Ovary (tissue), 10 donors: ENCODE measurements at regions of chr15 and their contacts with region 1.

Region 1: GRCh38 chr15:71660501-71660900 is 149.9 kb upstream of the NR2E3 start:
- DNase-seq: no peak
- H3K4me3 ChIP-seq: no peak overlapping the region
- H3K27ac ChIP-seq: no peak overlapping the region
- H3K4me1 ChIP-seq: no peaks in the 10 kb centered on the region
- H3K27me3 ChIP-seq: no peaks in the 10 kb centered on the region
- CTCF ChIP-seq: no peak
- EP300 ChIP-seq: no peak
- POLR2A ChIP-seq: no peak

Region 2: GRCh38 chr15:71575474-71576045 is 84.9 kb before region 1 on chr15:
- intact Hi-C with region 1: no loop called
- DNase-seq: no peak
- H3K4me3 ChIP-seq: no peak overlapping the region
- H3K27ac ChIP-seq: no peak overlapping the region
- H3K4me1 ChIP-seq: no peaks in the 10 kb centered on the region
- H3K27me3 ChIP-seq: no peaks in the 10 kb centered on the region
- CTCF ChIP-seq: no peak
- EP300 ChIP-seq: no peak
- POLR2A ChIP-seq: no peak

Region 3: GRCh38 chr15:71599418-71600151 is 60.9 kb before region 1 on chr15:
- intact Hi-C with region 1: loop called in 1 of 4 experiments (anchors 10 kb)
- DNase-seq: peak in 3 of 5 donors; percentile 20 to 49 (median 21)
- H3K4me3 ChIP-seq: no peak overlapping the region
- H3K27ac ChIP-seq: no peak overlapping the region
- H3K4me1 ChIP-seq: peaks cover 5% of the 10 kb centered on the region
- H3K27me3 ChIP-seq: no peaks in the 10 kb centered on the region
- CTCF ChIP-seq: no peak
- EP300 ChIP-seq: no peak
- POLR2A ChIP-seq: no peak